H1 (cell line): ENCODE measurements at regions of chr7 and their contacts with region 1.

Region 1: GRCh38 chr7:51101111-51101757 is 215.4 kb downstream of the COBL start:
- DNase-seq: no peak
- H3K4me3 ChIP-seq: no peak overlapping the region
- H3K27ac ChIP-seq: no peak overlapping the region
- H3K4me1 ChIP-seq: no peaks in the 10 kb centered on the region
- H3K27me3 ChIP-seq: no peaks in the 10 kb centered on the region
- CTCF ChIP-seq: no peak
- EP300 ChIP-seq: no peak
- POLR2A ChIP-seq: no peak
- RAD21 ChIP-seq: no peak

Region 2: GRCh38 chr7:51090411-51090810 is 10.8 kb before region 1 on chr7:
- CTCF ChIA-PET with region 1: no interaction called
- POLR2A ChIA-PET with region 1: interaction called, 11 read pairs
- DNase-seq: no peak
- H3K4me3 ChIP-seq: no peak overlapping the region
- H3K27ac ChIP-seq: no peak overlapping the region
- H3K4me1 ChIP-seq: peaks cover 0 to 10% (median 7%) of the 10 kb centered on the region in 4 experiments; a peak in 5 of 7 replicates
- H3K27me3 ChIP-seq: no peaks in the 10 kb centered on the region
- CTCF ChIP-seq: no peak
- EP300 ChIP-seq: no peak
- POLR2A ChIP-seq: no peak
- RAD21 ChIP-seq: no peak